IMR-90 (cell line): ENCODE measurements at regions of chr9 and their contacts with region 1.

Region 1: GRCh38 chr9:5510360-5510931 is at the start of gene PDCD1LG2:
- DNase-seq: peak; percentile 84
- ATAC-seq: peak; percentile 55
- H3K4me3 ChIP-seq: peak within 1 kb of the TSS; percentile 52
- H3K27ac ChIP-seq: peak within 1 kb of the TSS; percentile 94
- H3K4me1 ChIP-seq: peaks cover 22% of the 10 kb centered on the region
- H3K27me3 ChIP-seq: no peaks in the 10 kb centered on the region
- CTCF ChIP-seq: no peak
- POLR2A ChIP-seq: peak; percentile 55
- RAD21 ChIP-seq: no peak
- total RNA-seq, gene PDCD1LG2: 29.7 and 33.3 TPM in 2 replicates

Region 2: GRCh38 chr9:5459289-5459829 is 51.1 kb before region 1 on chr9:
- CTCF ChIA-PET with region 1: no interaction called
- POLR2A ChIA-PET with region 1: no interaction called
- dilution Hi-C with region 1: no loop called
- in situ Hi-C with region 1: no loop called
- intact Hi-C with region 1: loop called (anchors 2 kb)
- DNase-seq: no peak
- ATAC-seq: no peak
- H3K4me3 ChIP-seq: no peak overlapping the region
- H3K27ac ChIP-seq: no peak overlapping the region
- H3K4me1 ChIP-seq: peaks cover 2% of the 10 kb centered on the region; the same call in 1 of the 2 replicates
- H3K27me3 ChIP-seq: no peaks in the 10 kb centered on the region
- CTCF ChIP-seq: no peak
- POLR2A ChIP-seq: no peak
- RAD21 ChIP-seq: no peak

Region 3: GRCh38 chr9:5553211-5553610 is 42.8 kb after region 1 on chr9:
- CTCF ChIA-PET with region 1: interaction called, 3 read pairs
- POLR2A ChIA-PET with region 1: interaction called, 3 read pairs
- dilution Hi-C with region 1: no loop called
- in situ Hi-C with region 1: no loop called
- intact Hi-C with region 1: loop called (anchors 1 kb)
- DNase-seq: peak; percentile 89
- ATAC-seq: peak; percentile 51
- H3K4me3 ChIP-seq: no peak overlapping the region
- H3K27ac ChIP-seq: peak overlapping the region; percentile 92
- H3K4me1 ChIP-seq: peaks cover 28% of the 10 kb centered on the region
- H3K27me3 ChIP-seq: no peaks in the 10 kb centered on the region
- CTCF ChIP-seq: no peak
- POLR2A ChIP-seq: no peak
- RAD21 ChIP-seq: no peak